MCF 10A (cell line): ENCODE measurements at regions of chr7 and their contacts with region 1.

Region 1: DNA sequence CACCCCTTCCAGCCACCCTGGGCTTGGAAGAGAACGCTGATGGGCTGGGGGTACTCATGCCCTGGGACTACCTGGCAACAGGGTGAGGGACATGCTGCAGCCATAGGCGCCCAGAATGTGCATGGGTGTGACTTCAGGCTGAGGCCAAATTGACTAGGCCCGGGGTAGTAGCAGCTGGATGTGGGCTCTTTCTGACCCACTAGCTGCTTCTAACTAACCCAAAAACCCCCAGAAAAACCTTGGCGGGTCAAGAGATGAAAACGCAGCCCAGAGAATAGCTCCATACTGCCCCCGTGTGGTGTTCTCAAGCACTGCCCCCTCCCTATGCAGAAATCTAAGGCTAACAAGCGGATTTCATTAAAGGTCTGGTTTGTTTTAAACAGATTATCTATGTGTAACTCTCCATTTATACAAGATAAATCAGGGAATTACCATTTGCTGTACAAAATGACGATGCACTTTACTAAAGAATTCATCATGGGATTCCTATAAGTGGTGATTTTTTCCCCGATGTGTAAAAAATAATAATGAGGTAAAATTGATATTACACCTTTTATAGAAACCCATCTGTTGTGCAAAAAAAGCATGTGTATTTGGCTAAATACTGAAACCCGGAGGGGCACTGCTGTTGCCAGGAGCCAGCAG is 4.2 kb downstream of the SMARCD3 start:
- DNase-seq: peak; percentile 63
- H3K4me3 Mint-ChIP-seq: no peak overlapping the region
- H3K27ac Mint-ChIP-seq: no peak overlapping the region
- H3K4me1 Mint-ChIP-seq: peaks cover 22% of the 10 kb centered on the region
- H3K27me3 Mint-ChIP-seq: no peaks in the 10 kb centered on the region
- CTCF ChIP-seq: peak; percentile 80

Region 2: GRCh38 chr7:151185762-151186631 is 58.3 kb before region 1 on chr7:
- CTCF ChIA-PET with region 1: no interaction called
- POLR2A ChIA-PET with region 1: no interaction called
- intact Hi-C with region 1: no loop called
- DNase-seq: no peak
- H3K4me3 Mint-ChIP-seq: no peak overlapping the region
- H3K27ac Mint-ChIP-seq: no peak overlapping the region
- H3K4me1 Mint-ChIP-seq: no peaks in the 10 kb centered on the region
- H3K27me3 Mint-ChIP-seq: peaks cover 47% of the 10 kb centered on the region
- CTCF ChIP-seq: no peak

Region 3: GRCh38 chr7:151226875-151227782 is 17.2 kb before region 1 on chr7 and contains the start of gene ABCF2:
- CTCF ChIA-PET with region 1: interaction called, 6 read pairs
- POLR2A ChIA-PET with region 1: interaction called, 12 read pairs
- intact Hi-C with region 1: no loop called
- DNase-seq: peak; percentile 99
- H3K4me3 Mint-ChIP-seq: peak within 1 kb of the TSS; percentile 99
- H3K27ac Mint-ChIP-seq: peak within 1 kb of the TSS; percentile 99
- H3K4me1 Mint-ChIP-seq: peaks cover 24% of the 10 kb centered on the region
- H3K27me3 Mint-ChIP-seq: no peaks in the 10 kb centered on the region
- CTCF ChIP-seq: no peak
- total RNA-seq, gene ABCF2: 47.3 and 72.4 TPM in 2 replicates

Region 4: DNA sequence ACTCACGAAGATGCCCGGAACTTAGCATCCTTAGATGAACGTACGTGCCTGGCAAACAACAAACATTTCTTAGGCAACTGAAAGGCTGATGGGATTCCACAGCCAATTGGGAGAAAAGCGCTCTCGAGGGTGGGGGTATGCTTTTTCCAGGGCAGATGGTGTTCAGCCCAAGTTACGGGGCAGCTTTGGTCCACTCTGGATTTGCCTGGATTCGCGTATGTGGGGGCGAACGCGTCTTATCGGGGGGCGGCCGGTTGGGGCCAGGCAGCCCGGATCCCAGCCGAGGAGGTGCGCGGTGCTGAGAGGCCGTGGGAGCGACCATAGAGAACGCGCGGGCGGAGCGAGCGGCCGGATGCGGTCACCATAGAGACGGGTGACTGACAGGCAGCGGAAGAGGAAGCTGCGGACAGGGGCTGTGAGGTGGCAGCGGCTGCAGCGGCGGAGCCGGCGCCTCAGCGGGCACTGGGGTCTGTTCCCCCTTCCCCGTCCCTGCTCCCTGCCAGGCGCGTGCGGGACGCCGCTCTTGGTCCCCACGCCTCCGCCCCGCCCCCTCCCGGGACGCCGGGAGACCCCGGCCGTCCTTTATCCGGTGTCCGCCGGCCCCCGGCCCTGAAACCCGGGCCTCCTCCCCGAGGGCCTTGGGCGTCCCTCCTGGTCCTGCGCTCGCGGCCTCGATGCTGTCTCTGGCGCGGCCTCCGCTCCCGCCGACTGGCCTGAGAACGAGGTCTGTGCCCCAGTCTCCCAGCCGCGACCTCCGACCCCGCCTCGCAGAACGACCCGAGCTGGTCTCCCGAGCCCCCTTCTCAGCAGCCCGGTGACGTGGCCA is 12.0 kb before region 1 on chr7 and contains the start of gene CHPF2:
- CTCF ChIA-PET with region 1: interaction called, 21 read pairs
- POLR2A ChIA-PET with region 1: interaction called, 12 read pairs
- intact Hi-C with region 1: no loop called
- DNase-seq: peak; percentile 84
- H3K4me3 Mint-ChIP-seq: peak within 1 kb of the TSS; percentile 93
- H3K27ac Mint-ChIP-seq: peak within 1 kb of the TSS; percentile 93
- H3K4me1 Mint-ChIP-seq: peaks cover 17% of the 10 kb centered on the region
- H3K27me3 Mint-ChIP-seq: no peaks in the 10 kb centered on the region
- CTCF ChIP-seq: no peak
- total RNA-seq, gene CHPF2: 28.2 and 33.8 TPM in 2 replicates

Region 5: GRCh38 chr7:151304856-151305255 is 60.5 kb after region 1 on chr7:
- CTCF ChIA-PET with region 1: interaction called, 15 read pairs
- POLR2A ChIA-PET with region 1: no interaction called
- intact Hi-C with region 1: loop called (anchors 1 kb)
- DNase-seq: no peak
- H3K4me3 Mint-ChIP-seq: no peak overlapping the region
- H3K27ac Mint-ChIP-seq: no peak overlapping the region
- H3K4me1 Mint-ChIP-seq: peaks cover 7% of the 10 kb centered on the region
- H3K27me3 Mint-ChIP-seq: peaks cover 57% of the 10 kb centered on the region
- CTCF ChIP-seq: no peak